MCF 10A (cell line): ENCODE measurements at regions of chr3 and their contacts with region 1.

Region 1: DNA sequence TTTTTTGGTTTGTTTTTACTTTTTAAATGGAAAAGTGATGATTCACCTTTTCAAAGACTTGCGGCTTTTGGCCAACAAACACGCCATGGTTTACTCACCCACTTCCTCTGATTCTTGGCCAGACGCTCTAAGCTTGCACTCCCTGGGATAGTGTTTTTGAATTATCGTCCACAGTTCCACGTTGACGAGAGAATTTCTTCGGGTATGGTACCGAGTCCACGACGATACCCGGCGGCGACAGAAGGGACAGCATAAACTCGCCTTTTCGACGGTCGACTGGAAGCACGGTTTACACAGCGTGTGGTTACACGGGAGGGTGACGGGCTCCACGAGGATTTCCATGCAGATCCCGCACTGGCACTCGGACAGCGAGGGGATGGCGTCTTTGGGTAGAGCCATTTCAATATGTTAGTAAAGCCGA is 783 bp downstream of the RNF168 start:
- DNase-seq: peak; percentile 90
- H3K4me3 Mint-ChIP-seq: peak overlapping the region; percentile 99
- H3K27ac Mint-ChIP-seq: peak overlapping the region; percentile 75
- H3K4me1 Mint-ChIP-seq: peaks cover 20% of the 10 kb centered on the region
- H3K27me3 Mint-ChIP-seq: no peaks in the 10 kb centered on the region
- CTCF ChIP-seq: no peak

Region 2: GRCh38 chr3:196251918-196252317 is 250.9 kb before region 1 on chr3:
- CTCF ChIA-PET with region 1: interaction called, 4 read pairs
- POLR2A ChIA-PET with region 1: interaction called, 3 read pairs
- intact Hi-C with region 1: loop called (anchors 5 kb)
- DNase-seq: no peak
- H3K4me3 Mint-ChIP-seq: no peak overlapping the region
- H3K27ac Mint-ChIP-seq: no peak overlapping the region
- H3K4me1 Mint-ChIP-seq: no peaks in the 10 kb centered on the region
- H3K27me3 Mint-ChIP-seq: no peaks in the 10 kb centered on the region
- CTCF ChIP-seq: no peak

Region 3: GRCh38 chr3:196339493-196340254 is 163.1 kb before region 1 on chr3:
- CTCF ChIA-PET with region 1: no interaction called
- POLR2A ChIA-PET with region 1: interaction called, 26 read pairs
- intact Hi-C with region 1: loop called (anchors 5 kb)
- DNase-seq: peak; percentile 86
- H3K4me3 Mint-ChIP-seq: no peak overlapping the region
- H3K27ac Mint-ChIP-seq: peak overlapping the region; percentile 57
- H3K4me1 Mint-ChIP-seq: peaks cover 24% of the 10 kb centered on the region
- H3K27me3 Mint-ChIP-seq: no peaks in the 10 kb centered on the region
- CTCF ChIP-seq: no peak

Region 4: DNA sequence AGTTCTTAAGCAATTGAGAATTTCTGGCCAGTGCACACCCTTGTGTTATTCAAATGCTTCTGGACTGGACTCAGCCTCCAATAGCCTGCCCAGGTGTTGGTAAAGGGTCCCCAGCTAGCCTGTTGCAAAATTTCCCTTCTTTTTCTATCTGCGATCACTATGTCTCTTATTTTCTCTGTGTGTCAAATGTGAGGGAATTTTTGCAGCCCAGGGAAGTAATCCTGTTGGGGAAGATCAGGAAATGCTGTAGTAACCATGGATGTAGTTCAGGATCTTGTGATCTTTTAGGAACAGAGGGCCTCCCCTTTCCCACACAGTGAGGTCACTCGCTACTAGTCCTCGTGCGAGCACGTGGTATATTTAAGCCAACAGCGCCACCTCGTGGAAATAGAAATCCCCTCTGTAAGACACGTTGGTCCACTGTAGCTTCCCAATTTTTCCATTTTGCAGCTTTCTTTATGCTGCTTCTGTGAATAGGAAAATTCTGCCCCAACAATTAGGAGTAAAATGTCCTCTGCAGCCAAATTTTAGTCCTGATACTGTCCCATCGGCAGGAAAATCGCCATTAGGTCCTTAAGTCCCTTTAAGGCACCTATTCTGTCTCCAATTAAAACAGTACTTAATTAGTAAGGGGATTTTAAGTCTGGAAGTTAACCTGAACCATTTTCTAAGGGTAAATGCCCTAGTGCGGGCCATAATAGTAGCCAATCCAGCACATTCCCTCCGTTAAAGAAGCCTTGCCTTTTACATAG is 16.4 kb after region 1 on chr3:
- CTCF ChIA-PET with region 1: interaction called, 6 read pairs
- POLR2A ChIA-PET with region 1: interaction called, 10 read pairs
- intact Hi-C with region 1: no loop called
- DNase-seq: peak; percentile 82
- H3K4me3 Mint-ChIP-seq: no peak overlapping the region
- H3K27ac Mint-ChIP-seq: no peak overlapping the region
- H3K4me1 Mint-ChIP-seq: no peaks in the 10 kb centered on the region
- H3K27me3 Mint-ChIP-seq: no peaks in the 10 kb centered on the region
- CTCF ChIP-seq: peak; percentile 65

Region 5: GRCh38 chr3:196942226-196942914 is 439.6 kb after region 1 on chr3 and contains the start of gene NCBP2:
- CTCF ChIA-PET with region 1: no interaction called
- POLR2A ChIA-PET with region 1: interaction called, 10 read pairs
- intact Hi-C with region 1: no loop called
- DNase-seq: peak; percentile 97
- H3K4me3 Mint-ChIP-seq: peak within 1 kb of the TSS; percentile 80
- H3K27ac Mint-ChIP-seq: peak within 1 kb of the TSS; percentile 88
- H3K4me1 Mint-ChIP-seq: peaks cover 6% of the 10 kb centered on the region
- H3K27me3 Mint-ChIP-seq: no peaks in the 10 kb centered on the region
- CTCF ChIP-seq: peak; percentile 55
- total RNA-seq, gene NCBP2: 80.9 and 91.8 TPM in 2 replicates